ENCODE measurements at regions of chr14 and their contacts with region 1.

Region 1: GRCh38 chr14:21071225-21072030 is 1.3 kb downstream of the ARHGEF40 start:
- DNase-seq: peak; percentile 64
- H3K4me3 Mint-ChIP-seq: peak overlapping the region; percentile 83
- H3K27ac Mint-ChIP-seq: peak overlapping the region; percentile 54
- H3K4me1 Mint-ChIP-seq: peaks cover 26% of the 10 kb centered on the region
- H3K27me3 Mint-ChIP-seq: no peaks in the 10 kb centered on the region
- CTCF ChIP-seq: no peak

Region 2: DNA sequence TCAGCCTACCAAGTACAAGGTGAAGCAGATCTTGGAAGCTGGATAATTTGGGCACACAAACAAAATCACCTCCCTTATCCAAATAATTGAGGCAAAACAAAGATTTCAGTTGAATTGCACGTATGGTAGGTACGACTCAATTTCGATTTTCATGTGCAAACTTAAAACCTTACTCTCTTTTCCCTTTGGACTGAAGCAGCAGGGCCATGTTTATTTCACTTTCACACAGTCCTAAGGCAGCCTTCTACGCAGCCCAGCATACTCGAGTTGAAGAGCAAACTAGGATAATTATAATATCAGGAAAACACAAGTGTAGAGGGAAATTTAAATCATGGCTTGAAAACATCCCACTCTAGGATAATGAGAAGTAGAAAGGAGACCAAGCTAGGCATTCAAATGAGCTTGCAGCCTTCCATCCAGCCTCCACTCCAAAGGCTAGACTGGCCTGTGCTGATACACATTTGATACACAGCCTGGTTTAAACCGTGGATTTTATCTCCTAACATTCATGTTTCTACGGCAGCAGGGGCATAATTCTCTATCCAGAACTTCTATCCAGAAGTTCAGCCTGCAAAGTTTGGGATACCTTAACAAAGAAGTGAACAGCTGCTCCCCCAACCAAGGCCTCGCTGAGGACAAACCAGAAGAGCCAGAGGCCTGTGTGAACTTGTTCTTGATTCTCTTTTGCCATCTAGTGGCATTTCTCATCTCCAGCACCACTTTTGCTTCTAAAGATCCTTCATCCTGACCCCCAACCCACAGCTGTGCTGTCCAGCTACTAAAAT is 31.7 kb before region 1 on chr14:
- CTCF ChIA-PET with region 1: interaction called, 28 read pairs
- POLR2A ChIA-PET with region 1: interaction called, 5 read pairs
- intact Hi-C with region 1: no loop called
- DNase-seq: peak; percentile 69
- H3K4me3 Mint-ChIP-seq: no peak overlapping the region
- H3K27ac Mint-ChIP-seq: no peak overlapping the region
- H3K4me1 Mint-ChIP-seq: peaks cover 34% of the 10 kb centered on the region
- H3K27me3 Mint-ChIP-seq: no peaks in the 10 kb centered on the region
- CTCF ChIP-seq: peak; percentile 51

Region 3: DNA sequence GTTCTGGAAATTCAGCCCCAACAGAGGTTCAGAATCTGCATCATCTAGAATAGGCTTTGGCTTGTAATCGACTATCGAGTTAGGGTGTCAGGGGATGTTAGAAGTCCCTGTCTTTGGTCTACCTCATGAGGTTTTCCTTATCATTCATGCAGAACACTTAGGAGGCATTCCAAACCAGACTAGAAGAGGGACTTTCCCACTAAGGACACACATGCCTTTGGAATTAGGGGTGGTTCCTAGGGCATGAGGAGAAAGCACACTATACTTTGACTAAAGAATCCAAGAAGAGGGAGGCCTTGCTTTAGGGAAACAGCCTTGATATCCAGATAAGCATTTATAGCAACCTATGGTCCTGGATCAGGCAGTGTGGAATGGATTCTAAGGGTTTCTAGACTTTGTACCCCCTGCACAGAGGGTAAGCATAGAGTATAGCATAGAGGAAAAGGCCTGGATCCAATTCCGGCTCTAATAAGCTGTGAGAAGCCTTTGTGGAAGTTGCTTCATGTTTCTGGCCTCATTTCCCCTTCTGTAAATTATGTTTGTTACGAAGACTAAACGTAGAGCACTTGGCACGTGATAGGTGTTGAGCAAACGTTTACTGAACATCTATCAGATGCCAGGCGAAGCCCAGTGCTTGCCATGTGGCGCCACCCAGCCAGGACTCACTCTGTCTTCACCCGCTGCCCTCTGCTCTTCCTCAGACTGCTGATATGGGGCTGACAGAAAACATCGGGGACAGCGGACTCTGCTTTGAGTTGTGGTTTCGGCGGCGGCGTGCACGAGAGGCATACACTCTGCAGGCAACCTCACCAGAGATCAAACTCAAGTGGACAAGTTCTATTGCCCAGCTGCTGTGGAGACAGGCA is 13.8 kb after region 1 on chr14:
- CTCF ChIA-PET with region 1: interaction called, 25 read pairs
- POLR2A ChIA-PET with region 1: interaction called, 9 read pairs
- intact Hi-C with region 1: no loop called
- DNase-seq: no peak
- H3K4me3 Mint-ChIP-seq: no peak overlapping the region
- H3K27ac Mint-ChIP-seq: peak overlapping the region; percentile 80
- H3K4me1 Mint-ChIP-seq: peaks cover 13% of the 10 kb centered on the region
- H3K27me3 Mint-ChIP-seq: no peaks in the 10 kb centered on the region
- CTCF ChIP-seq: no peak

Region 4: GRCh38 chr14:21098076-21098891 is 26.9 kb after region 1 on chr14 and contains the start of gene ZNF219:
- CTCF ChIA-PET with region 1: interaction called, 127 read pairs
- POLR2A ChIA-PET with region 1: interaction called, 38 read pairs
- intact Hi-C with region 1: no loop called
- DNase-seq: peak; percentile 67
- H3K4me3 Mint-ChIP-seq: peak within 1 kb of the TSS; percentile 85
- H3K27ac Mint-ChIP-seq: peak within 1 kb of the TSS; percentile 90
- H3K4me1 Mint-ChIP-seq: peaks cover 34% of the 10 kb centered on the region
- H3K27me3 Mint-ChIP-seq: no peaks in the 10 kb centered on the region
- CTCF ChIP-seq: no peak
- total RNA-seq, gene ZNF219: 18.4 and 33.8 TPM in 2 replicates

Region 5: DNA sequence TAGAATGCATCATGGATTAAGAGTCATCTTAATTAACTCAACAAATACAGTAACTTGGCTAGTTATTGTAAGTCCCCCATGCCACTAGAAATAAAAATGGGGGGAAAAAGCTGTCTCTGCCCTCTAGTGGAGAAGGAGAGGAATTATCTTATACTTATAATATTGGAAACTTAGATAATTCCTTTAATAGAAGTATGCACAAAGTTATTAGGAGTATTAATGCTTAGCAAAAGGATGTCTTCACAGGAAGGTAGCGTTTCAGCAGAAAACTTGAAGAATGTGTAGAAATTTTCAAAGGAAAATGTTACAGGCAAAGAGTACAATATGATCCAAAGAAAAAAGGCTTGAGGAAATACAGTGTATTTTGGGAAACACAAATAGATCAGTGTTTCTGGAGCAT is 64.6 kb after region 1 on chr14:
- CTCF ChIA-PET with region 1: interaction called, 3 read pairs
- POLR2A ChIA-PET with region 1: no interaction called
- intact Hi-C with region 1: loop called (anchors 10 kb)
- DNase-seq: peak; percentile 16
- H3K4me3 Mint-ChIP-seq: no peak overlapping the region
- H3K27ac Mint-ChIP-seq: no peak overlapping the region
- H3K4me1 Mint-ChIP-seq: no peaks in the 10 kb centered on the region
- H3K27me3 Mint-ChIP-seq: no peaks in the 10 kb centered on the region
- CTCF ChIP-seq: peak; percentile 74

Measured in MCF 10A (cell line).